Transverse colon (tissue), 4 donors: ENCODE measurements at regions of chr15 and their contacts with region 1.

Region 1: GRCh38 chr15:85044251-85044853 is 62.7 kb downstream of the PDE8A start:
- DNase-seq: peak; percentile 70
- H3K4me3 ChIP-seq: no peak overlapping the region
- H3K27ac ChIP-seq: peak overlapping the region in 2 of 4 donors; percentile 6 to 11
- H3K4me1 ChIP-seq: peaks cover 9 to 57% (median 16%) of the 10 kb centered on the region in 4 donors
- H3K27me3 ChIP-seq: no peaks in the 10 kb centered on the region
- CTCF ChIP-seq: peak; percentile 58 to 67 (median 60)
- EP300 ChIP-seq: no peak
- POLR2A ChIP-seq: no peak

Region 2: GRCh38 chr15:84863565-84864443 is 180.5 kb before region 1 on chr15:
- in situ Hi-C with region 1: no loop called
- intact Hi-C with region 1: no loop called
- DNase-seq: no peak
- H3K4me3 ChIP-seq: no peak overlapping the region
- H3K27ac ChIP-seq: no peak overlapping the region
- H3K4me1 ChIP-seq: no peaks in the 10 kb centered on the region
- H3K27me3 ChIP-seq: no peaks in the 10 kb centered on the region
- CTCF ChIP-seq: no peak
- EP300 ChIP-seq: no peak
- POLR2A ChIP-seq: no peak

Region 3: GRCh38 chr15:84949845-84950569 is 94.3 kb before region 1 on chr15:
- in situ Hi-C with region 1: loop called in 1 of 4 experiments (anchors 5 kb)
- intact Hi-C with region 1: no loop called
- DNase-seq: no peak
- H3K4me3 ChIP-seq: no peak overlapping the region
- H3K27ac ChIP-seq: no peak overlapping the region
- H3K4me1 ChIP-seq: no peaks in the 10 kb centered on the region
- H3K27me3 ChIP-seq: no peaks in the 10 kb centered on the region
- CTCF ChIP-seq: no peak
- EP300 ChIP-seq: no peak
- POLR2A ChIP-seq: no peak

Region 4: DNA sequence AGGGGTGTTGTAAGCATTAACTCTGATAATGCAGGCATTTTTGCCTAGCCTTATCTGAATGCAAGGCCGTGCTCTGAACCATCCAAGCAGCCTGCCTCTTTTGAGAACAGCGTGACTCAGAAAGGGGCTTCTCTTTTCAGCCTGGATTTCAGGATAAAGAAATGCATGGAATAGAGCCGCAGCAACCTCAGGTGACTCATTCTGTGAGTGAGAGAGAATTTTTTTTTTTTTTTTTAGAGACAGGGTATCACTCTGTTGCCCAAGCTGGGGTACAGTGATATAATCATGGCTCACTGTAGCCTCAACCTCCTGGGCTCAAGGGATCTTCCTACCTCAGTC is 83.3 kb before region 1 on chr15:
- in situ Hi-C with region 1: loop called in 2 of 4 experiments (anchors 5 to 10 kb)
- intact Hi-C with region 1: loop called (anchors 5 kb)
- DNase-seq: no peak
- H3K4me3 ChIP-seq: no peak overlapping the region
- H3K27ac ChIP-seq: no peak overlapping the region
- H3K4me1 ChIP-seq: no peaks in the 10 kb centered on the region
- H3K27me3 ChIP-seq: no peaks in the 10 kb centered on the region
- CTCF ChIP-seq: no peak
- EP300 ChIP-seq: no peak
- POLR2A ChIP-seq: no peak

Region 5: GRCh38 chr15:84981711-84982300 is 62.5 kb before region 1 on chr15 and contains the start of gene PDE8A:
- in situ Hi-C with region 1: loop called in 1 of 4 experiments (anchors 10 kb)
- intact Hi-C with region 1: loop called (anchors 2 kb)
- DNase-seq: peak; percentile 63
- H3K4me3 ChIP-seq: peak within 1 kb of the TSS; percentile 89 to 96 (median 93)
- H3K27ac ChIP-seq: peak within 1 kb of the TSS; percentile 97 to 98 (median 97)
- H3K4me1 ChIP-seq: peaks cover 3 to 51% (median 36%) of the 10 kb centered on the region in 4 donors
- H3K27me3 ChIP-seq: no peaks in the 10 kb centered on the region
- CTCF ChIP-seq: no peak
- EP300 ChIP-seq: no peak
- POLR2A ChIP-seq: no peak
- total RNA-seq, gene PDE8A: 115 to 188 (median 165) TPM

Region 6: GRCh38 chr15:85116925-85117680 is 72.8 kb after region 1 on chr15:
- in situ Hi-C with region 1: no loop called
- intact Hi-C with region 1: no loop called
- DNase-seq: no peak
- H3K4me3 ChIP-seq: no peak overlapping the region
- H3K27ac ChIP-seq: no peak overlapping the region
- H3K4me1 ChIP-seq: no peaks in the 10 kb centered on the region
- H3K27me3 ChIP-seq: no peaks in the 10 kb centered on the region
- CTCF ChIP-seq: no peak
- EP300 ChIP-seq: no peak
- POLR2A ChIP-seq: no peak